Transverse colon (tissue), 4 donors: ENCODE measurements at regions of chrX and their contacts with region 1.

Region 1: DNA sequence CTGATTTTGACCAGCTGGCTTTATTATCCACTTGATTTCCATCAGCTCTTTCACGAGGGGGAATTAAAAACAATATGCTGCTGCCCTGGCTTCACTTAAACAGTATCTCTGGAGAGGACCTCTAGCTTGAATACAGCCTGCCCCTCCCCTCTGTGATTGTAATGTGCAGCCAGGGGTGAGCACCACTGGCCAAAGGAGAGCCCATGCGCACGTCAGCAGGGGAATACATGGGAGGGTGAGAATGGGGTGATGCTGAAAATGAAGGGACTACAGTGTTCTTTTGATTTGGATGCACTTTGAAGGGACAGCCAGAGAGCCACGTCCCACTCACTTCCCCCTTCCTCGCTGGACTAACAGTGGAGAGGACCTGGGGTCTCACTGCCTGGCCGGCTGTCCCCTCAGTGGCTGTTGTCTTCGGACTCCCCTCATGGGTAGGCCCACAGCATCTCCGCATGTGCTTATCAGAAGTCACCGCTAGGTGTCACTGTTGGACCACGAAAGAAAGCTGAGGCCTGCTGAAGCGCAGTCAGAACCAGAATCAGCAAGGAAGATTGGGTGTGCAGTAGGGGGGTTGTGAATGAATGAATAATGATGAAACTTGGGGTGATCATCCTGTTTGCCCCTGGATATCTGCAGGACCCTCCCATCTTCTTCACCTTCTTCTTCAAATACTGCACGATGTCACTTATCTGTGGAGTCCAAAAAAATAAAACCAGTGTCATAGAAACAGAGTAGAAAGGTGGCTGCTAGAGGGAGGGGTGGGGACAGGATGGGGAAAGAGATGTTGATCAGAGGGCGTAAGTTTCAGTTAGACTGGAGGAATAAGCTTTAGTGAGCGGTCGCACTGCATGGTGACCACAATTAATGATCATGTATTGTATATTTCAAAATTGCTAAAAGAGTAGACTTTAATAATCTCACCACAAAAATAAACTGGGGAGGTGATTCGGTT is 32.8 kb downstream of the CLCN4 start:
- DNase-seq: peak; percentile 79
- H3K4me3 ChIP-seq: no peak overlapping the region
- H3K27ac ChIP-seq: no peak overlapping the region
- H3K4me1 ChIP-seq: no peaks in the 10 kb centered on the region
- H3K27me3 ChIP-seq: no peaks in the 10 kb centered on the region
- CTCF ChIP-seq: peak; percentile 60 to 85 (median 63)
- EP300 ChIP-seq: no peak
- POLR2A ChIP-seq: no peak

Region 2: GRCh38 chrX:10615931-10616775 is 426.6 kb after region 1 on chrX:
- in situ Hi-C with region 1: loop called in 3 of 4 experiments (anchors 25 kb)
- intact Hi-C with region 1: no loop called
- DNase-seq: peak; percentile 46
- H3K4me3 ChIP-seq: no peak overlapping the region
- H3K27ac ChIP-seq: peak overlapping the region; percentile 23 to 85 (median 80)
- H3K4me1 ChIP-seq: peaks cover 0 to 22% (median 12%) of the 10 kb centered on the region in 4 donors
- H3K27me3 ChIP-seq: no peaks in the 10 kb centered on the region
- CTCF ChIP-seq: peak; percentile 52 to 62 (median 60)
- EP300 ChIP-seq: no peak
- POLR2A ChIP-seq: no peak

Region 3: GRCh38 chrX:10722851-10723250 is 533.3 kb after region 1 on chrX:
- in situ Hi-C with region 1: loop called in 2 of 4 experiments (anchors 10 to 25 kb)
- intact Hi-C with region 1: loop called (anchors 10 kb)
- DNase-seq: peak; percentile 59
- H3K4me3 ChIP-seq: no peak overlapping the region
- H3K27ac ChIP-seq: peak overlapping the region in 1 of 4 donors; percentile 16
- H3K4me1 ChIP-seq: no peaks in the 10 kb centered on the region
- H3K27me3 ChIP-seq: no peaks in the 10 kb centered on the region
- CTCF ChIP-seq: peak; percentile 51 to 67 (median 60)
- EP300 ChIP-seq: no peak
- POLR2A ChIP-seq: no peak

Region 4: DNA sequence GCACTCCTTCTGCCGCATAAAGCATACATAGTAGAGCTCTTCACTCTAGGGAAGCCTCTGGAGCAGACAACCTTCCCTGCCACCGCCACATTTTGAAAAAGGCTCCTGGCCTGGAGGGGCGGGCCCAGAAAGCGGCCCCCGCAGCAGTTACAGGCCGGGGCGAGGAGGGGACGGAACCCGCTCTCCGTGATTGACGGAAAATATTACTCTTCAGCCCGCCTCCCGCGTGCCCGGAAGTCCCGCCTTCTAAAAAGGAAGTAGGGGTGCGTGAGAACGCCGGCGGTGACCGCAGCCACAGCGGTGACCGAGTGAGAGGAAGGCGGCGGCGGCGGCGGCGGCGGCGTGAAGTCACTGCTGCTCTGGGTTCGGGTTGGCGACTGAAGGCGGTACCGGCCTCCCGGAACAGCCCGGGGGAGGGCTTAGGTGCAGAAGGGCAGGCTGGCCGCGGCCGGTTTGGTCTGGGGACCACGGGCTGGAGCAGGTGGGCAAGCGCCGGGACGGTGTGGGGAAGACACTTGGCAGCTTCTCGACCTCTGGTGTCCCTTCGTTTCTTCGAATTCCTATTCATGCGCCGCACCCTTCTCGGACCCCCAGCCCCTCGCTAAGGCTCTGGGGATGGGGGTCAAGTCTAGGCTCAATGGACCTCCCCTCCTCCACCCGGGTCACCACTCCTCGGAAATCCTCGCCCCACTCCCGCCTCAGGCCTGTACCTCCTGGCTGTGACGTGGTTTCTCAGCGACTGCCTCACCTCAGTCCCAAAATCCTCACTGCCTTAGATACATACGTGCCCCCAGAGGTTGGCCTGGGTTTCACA is 921.7 kb after region 1 on chrX and contains the start of gene HCCS:
- in situ Hi-C with region 1: loop called in 1 of 4 experiments (anchors 25 kb)
- intact Hi-C with region 1: no loop called
- DNase-seq: peak; percentile 87
- H3K4me3 ChIP-seq: peak within 1 kb of the TSS; percentile 46 to 80 (median 64)
- H3K27ac ChIP-seq: peak within 1 kb of the TSS; percentile 86 to 97 (median 91)
- H3K4me1 ChIP-seq: peaks cover 8 to 19% (median 9%) of the 10 kb centered on the region in 4 donors
- H3K27me3 ChIP-seq: no peaks in the 10 kb centered on the region
- CTCF ChIP-seq: peak in 1 of 5 experiments; percentile 14
- EP300 ChIP-seq: no peak
- POLR2A ChIP-seq: peak; percentile 95
- total RNA-seq, gene HCCS: 1.6 to 26.4 (median 13.0) TPM

Region 5: GRCh38 chrX:11143931-11144678 is 954.5 kb after region 1 on chrX:
- in situ Hi-C with region 1: loop called in 3 of 4 experiments (anchors 25 kb)
- intact Hi-C with region 1: no loop called
- DNase-seq: peak; percentile 58
- H3K4me3 ChIP-seq: no peak overlapping the region
- H3K27ac ChIP-seq: no peak overlapping the region
- H3K4me1 ChIP-seq: peaks cover 0 to 5% (median 0%) of the 10 kb centered on the region in 4 donors
- H3K27me3 ChIP-seq: no peaks in the 10 kb centered on the region
- CTCF ChIP-seq: peak; percentile 48 to 68 (median 60)
- EP300 ChIP-seq: no peak
- POLR2A ChIP-seq: no peak